Activated CD8-positive, alpha-beta T cell treated with anti-CD3 and anti-CD28 coated beads, Interleukin-2, amount 10 ng/mL, durations not matched to agents 7 days and 5 days (primary cell): ENCODE measurements at regions of chr22 and their contacts with region 1.

Region 1: GRCh38 chr22:44180706-44181032 is at the start of gene PARVG:
- DNase-seq: peak; percentile 72
- ATAC-seq: peak; percentile 30
- H3K4me3 Mint-ChIP-seq: peak within 1 kb of the TSS; percentile 95
- H3K27ac Mint-ChIP-seq: peak within 1 kb of the TSS; percentile 92
- H3K4me1 Mint-ChIP-seq: peaks cover 32% of the 10 kb centered on the region
- H3K27me3 Mint-ChIP-seq: peaks cover 10% of the 10 kb centered on the region
- total RNA-seq, gene PARVG: 175 to 186 TPM

Region 2: DNA sequence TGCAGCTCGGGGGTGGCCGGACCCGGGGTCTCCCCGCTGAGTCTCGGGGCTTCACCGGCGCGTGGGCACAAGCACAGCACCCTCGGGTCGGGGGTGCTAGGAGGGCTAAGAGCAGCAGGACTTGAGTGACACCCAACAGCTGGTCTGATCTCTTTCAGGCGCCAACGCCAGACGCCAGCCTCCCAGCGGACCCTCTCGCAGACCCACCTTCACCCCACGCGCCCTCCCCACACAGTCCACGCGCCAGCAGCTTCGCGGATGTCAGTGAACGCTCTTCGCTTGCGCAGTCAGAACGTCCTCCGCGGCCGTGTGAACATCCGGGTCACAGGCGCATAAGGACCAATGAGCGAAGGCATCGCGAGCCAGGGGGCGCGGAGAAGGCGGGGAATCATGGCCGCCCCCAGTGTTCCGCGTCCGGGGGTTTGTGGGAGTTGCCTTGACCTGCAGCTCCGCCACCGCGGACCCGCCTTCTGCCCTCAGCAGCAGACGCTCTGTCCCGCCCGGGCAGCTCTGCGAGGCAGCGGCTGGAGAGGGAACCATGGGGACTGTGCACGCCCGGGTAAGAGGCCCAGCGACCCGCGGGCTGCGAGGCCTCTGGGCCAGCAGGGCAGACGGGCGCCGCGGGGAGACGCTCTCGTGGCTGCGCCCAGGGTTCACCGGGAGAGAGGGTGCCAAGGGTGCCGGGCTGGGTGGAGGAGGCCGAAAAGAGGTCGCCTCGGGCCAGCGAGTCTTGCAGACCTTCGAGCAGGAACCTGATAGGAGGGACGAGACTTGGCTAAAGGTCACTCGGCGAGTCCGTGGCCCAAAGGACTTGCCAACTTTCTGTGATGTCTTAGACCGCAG is 225.4 kb before region 1 on chr22 and contains the start of gene SAMM50:
- CTCF ChIA-PET with region 1: no interaction called
- POLR2A ChIA-PET with region 1: interaction called, 10 read pairs
- DNase-seq: peak; percentile 94
- ATAC-seq: peak; percentile 97
- H3K4me3 Mint-ChIP-seq: peak within 1 kb of the TSS; percentile 95
- H3K27ac Mint-ChIP-seq: peak within 1 kb of the TSS; percentile 93
- H3K4me1 Mint-ChIP-seq: peaks cover 31% of the 10 kb centered on the region
- H3K27me3 Mint-ChIP-seq: no peaks in the 10 kb centered on the region
- total RNA-seq, gene SAMM50: 50.7 to 52.4 TPM

Region 3: DNA sequence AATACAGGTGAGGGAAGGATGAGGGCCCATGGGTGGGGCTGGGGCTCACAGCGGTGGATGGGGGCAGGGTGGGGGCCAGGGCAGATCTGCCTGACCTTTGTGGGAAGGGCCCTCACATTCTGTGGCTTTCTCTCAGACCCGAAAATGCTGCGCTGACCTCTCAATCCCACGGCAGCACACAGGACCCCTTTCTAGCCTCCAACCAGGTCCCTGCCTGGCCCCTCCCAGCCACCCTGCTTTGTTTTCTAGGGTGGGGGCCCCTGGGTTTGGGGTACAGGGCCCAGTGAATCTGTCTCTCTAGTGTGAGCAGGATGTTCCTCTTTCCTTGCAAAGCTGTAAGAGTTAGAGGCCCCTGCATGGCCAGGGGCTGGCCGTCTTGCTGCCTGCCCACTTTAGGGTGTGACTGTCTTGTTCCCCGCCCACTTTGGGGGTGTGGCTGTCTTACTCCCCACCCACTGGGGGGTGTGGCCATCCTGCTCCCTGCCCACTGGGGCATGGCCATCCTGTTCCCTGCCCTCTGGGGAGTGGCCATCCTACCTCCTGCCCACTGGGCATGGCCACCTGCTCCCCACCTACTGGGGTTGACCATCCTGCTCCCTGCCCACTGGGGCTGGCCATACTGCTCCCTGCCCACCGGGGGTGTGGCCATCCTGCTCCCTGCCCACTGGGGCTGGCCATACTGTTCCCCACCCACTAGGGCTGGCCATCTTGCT is 11.6 kb after region 1 on chr22:
- CTCF ChIA-PET with region 1: interaction called, 5 read pairs
- POLR2A ChIA-PET with region 1: interaction called, 53 read pairs
- DNase-seq: peak; percentile 59
- ATAC-seq: peak; percentile 61
- H3K4me3 Mint-ChIP-seq: no peak overlapping the region
- H3K27ac Mint-ChIP-seq: no peak overlapping the region
- H3K4me1 Mint-ChIP-seq: peaks cover 44% of the 10 kb centered on the region
- H3K27me3 Mint-ChIP-seq: no peaks in the 10 kb centered on the region

Region 4: GRCh38 chr22:44369916-44370801 is 189.5 kb after region 1 on chr22:
- CTCF ChIA-PET with region 1: no interaction called
- POLR2A ChIA-PET with region 1: no interaction called
- DNase-seq: no peak
- ATAC-seq: no peak
- H3K4me3 Mint-ChIP-seq: no peak overlapping the region
- H3K27ac Mint-ChIP-seq: no peak overlapping the region
- H3K4me1 Mint-ChIP-seq: no peaks in the 10 kb centered on the region
- H3K27me3 Mint-ChIP-seq: peaks cover 8% of the 10 kb centered on the region